Naive thymus-derived CD4-positive, alpha-beta T cell (primary cell): ENCODE measurements at regions of chr6 and their contacts with region 1.

Region 1: DNA sequence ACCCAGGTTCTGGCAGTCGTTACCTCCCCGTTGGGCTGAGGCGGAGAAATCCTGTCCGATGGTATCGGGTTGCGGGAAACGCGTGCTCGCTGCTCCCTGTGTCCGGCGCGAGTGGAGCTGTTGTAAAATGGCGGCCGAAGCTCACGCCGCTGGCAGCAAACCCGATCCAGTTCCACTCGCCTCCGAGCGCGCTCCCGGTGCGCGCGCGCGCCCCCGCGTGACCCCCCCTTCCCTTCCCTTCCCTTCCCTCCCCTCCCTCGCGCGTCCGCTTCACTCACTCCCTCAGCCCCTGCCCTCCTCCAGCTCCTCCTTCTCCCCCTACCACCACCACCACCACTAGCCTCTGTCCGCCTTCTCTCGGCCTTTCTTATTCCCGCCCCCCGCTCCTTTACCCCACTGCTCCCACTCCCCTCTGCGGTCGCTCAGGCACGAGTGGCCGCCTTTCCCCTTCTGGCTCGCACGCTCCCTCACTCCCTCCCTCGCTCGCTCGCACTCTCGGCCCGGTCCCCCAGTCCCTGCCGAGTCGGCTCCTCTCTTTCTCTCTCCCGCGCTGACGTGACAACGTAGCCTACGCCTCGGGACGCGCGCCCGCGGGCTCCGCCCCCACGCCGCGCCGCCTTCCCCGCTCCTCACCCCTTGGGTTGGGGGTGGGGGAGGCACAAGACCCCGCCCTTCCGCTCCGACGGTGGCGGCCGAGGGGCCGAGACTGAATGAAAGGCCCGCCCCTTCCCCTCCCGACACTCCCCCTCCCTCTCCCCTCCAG is at the start of gene SYNCRIP:
- DNase-seq: peak; percentile 96 to 99 (median 99)
- ATAC-seq: peak; percentile 91
- H3K4me3 ChIP-seq: peak within 1 kb of the TSS; percentile 99
- H3K4me3 Mint-ChIP-seq: peak within 1 kb of the TSS; percentile 90 to 99 (median 96)
- H3K27ac ChIP-seq: peak within 1 kb of the TSS; percentile 99
- H3K27ac Mint-ChIP-seq: peak within 1 kb of the TSS; percentile 97 to 100 (median 99)
- H3K4me1 ChIP-seq: peaks cover 29 to 31% of the 10 kb centered on the region in 2 donors
- H3K4me1 Mint-ChIP-seq: peaks cover 40 to 52% (median 49%) of the 10 kb centered on the region in 7 donors
- H3K27me3 ChIP-seq: no peaks in the 10 kb centered on the region
- H3K27me3 Mint-ChIP-seq: peaks cover 0 to under 1% (median 0%) of the 10 kb centered on the region in 5 donors
- total RNA-seq, gene SYNCRIP: 69.8 to 131 (median 82.2) TPM

Region 2: GRCh38 chr6:83859410-83860358 is 1783.3 kb before region 1 on chr6 and contains the start of gene CYB5R4:
- CTCF ChIA-PET with region 1: no interaction called
- POLR2A ChIA-PET with region 1: no interaction called
- intact Hi-C with region 1: loop called in 1 of 2 experiments (anchors 2 kb)
- DNase-seq: peak; percentile 88 to 95 (median 94)
- ATAC-seq: peak; percentile 98
- H3K4me3 ChIP-seq: peak within 1 kb of the TSS; percentile 92
- H3K4me3 Mint-ChIP-seq: peak within 1 kb of the TSS; percentile 87 to 100 (median 98)
- H3K27ac ChIP-seq: peak within 1 kb of the TSS; percentile 82
- H3K27ac Mint-ChIP-seq: peak within 1 kb of the TSS; percentile 85 to 96 (median 91)
- H3K4me1 ChIP-seq: peaks cover 14 to 21% of the 10 kb centered on the region in 2 donors
- H3K4me1 Mint-ChIP-seq: peaks cover 23 to 47% (median 37%) of the 10 kb centered on the region in 7 donors
- H3K27me3 ChIP-seq: no peaks in the 10 kb centered on the region
- H3K27me3 Mint-ChIP-seq: peaks cover 8 to 18% (median 16%) of the 10 kb centered on the region in 5 donors
- total RNA-seq, gene CYB5R4: 17.8 to 38.6 (median 21.0) TPM

Region 3: GRCh38 chr6:85449818-85450759 is 192.9 kb before region 1 on chr6 and contains the start of gene NT5E:
- CTCF ChIA-PET with region 1: no interaction called
- POLR2A ChIA-PET with region 1: no interaction called
- intact Hi-C with region 1: loop called in 1 of 2 experiments (anchors 5 kb)
- DNase-seq: peak in 5 of 9 donors; percentile 17 to 67 (median 30)
- ATAC-seq: peak; percentile 68
- H3K4me3 ChIP-seq: peak within 1 kb of the TSS; percentile 50
- H3K4me3 Mint-ChIP-seq: peak within 1 kb of the TSS; percentile 82 to 98 (median 89)
- H3K27ac ChIP-seq: no peak within 1 kb of the TSS
- H3K27ac Mint-ChIP-seq: peak within 1 kb of the TSS in 8 of 9 donors; percentile 10 to 95 (median 58)
- H3K4me1 ChIP-seq: peaks cover 0 to 9% of the 10 kb centered on the region in 2 donors
- H3K4me1 Mint-ChIP-seq: peaks cover 20 to 65% (median 46%) of the 10 kb centered on the region in 7 donors
- H3K27me3 ChIP-seq: peaks cover 0 to 15% of the 10 kb centered on the region in 2 donors
- H3K27me3 Mint-ChIP-seq: peaks cover 30 to 77% (median 63%) of the 10 kb centered on the region in 5 donors
- total RNA-seq, gene NT5E: 1.5 to 29.3 (median 2.8) TPM

Region 4: DNA sequence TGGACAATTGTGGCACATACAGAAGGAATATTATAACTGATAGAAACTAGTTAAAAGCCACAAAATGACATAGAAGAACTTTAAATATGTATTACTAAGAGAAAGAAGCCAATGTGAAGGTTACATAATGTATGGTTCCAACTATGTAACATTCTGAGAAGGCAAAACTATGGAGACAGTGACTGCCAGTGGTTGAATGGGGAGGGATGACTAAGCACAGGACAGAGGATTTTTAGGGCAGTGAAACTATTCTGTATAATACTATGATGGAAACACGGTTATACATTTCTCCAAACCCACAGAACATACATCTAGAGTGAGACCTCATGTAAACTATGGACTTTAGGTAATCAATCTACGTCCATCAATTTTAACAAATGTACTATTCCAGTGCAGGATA is 22.6 kb before region 1 on chr6:
- CTCF ChIA-PET with region 1: no interaction called
- POLR2A ChIA-PET with region 1: interaction called, 5 read pairs
- intact Hi-C with region 1: loop called (anchors 2 kb)
- DNase-seq: no peak
- ATAC-seq: no peak
- H3K4me3 ChIP-seq: no peak overlapping the region
- H3K4me3 Mint-ChIP-seq: no peak overlapping the region
- H3K27ac ChIP-seq: no peak overlapping the region
- H3K27ac Mint-ChIP-seq: peak overlapping the region in 4 of 9 donors; percentile 1 to 52 (median 16)
- H3K4me1 ChIP-seq: no peaks in the 10 kb centered on the region
- H3K4me1 Mint-ChIP-seq: peaks cover 18 to 42% (median 30%) of the 10 kb centered on the region in 7 donors
- H3K27me3 ChIP-seq: no peaks in the 10 kb centered on the region
- H3K27me3 Mint-ChIP-seq: no peaks in the 10 kb centered on the region

Region 5: GRCh38 chr6:85669735-85670194 is 26.8 kb after region 1 on chr6:
- CTCF ChIA-PET with region 1: interaction called, 5 read pairs
- POLR2A ChIA-PET with region 1: interaction called, 593 read pairs
- intact Hi-C with region 1: no loop called
- DNase-seq: peak in 8 of 9 donors; percentile 24 to 64 (median 50)
- ATAC-seq: peak; percentile 95
- H3K4me3 ChIP-seq: no peak overlapping the region
- H3K4me3 Mint-ChIP-seq: peak overlapping the region; percentile 52 to 80 (median 70)
- H3K27ac ChIP-seq: peak overlapping the region; percentile 46
- H3K27ac Mint-ChIP-seq: peak overlapping the region; percentile 80 to 95 (median 91)
- H3K4me1 ChIP-seq: peaks cover 24 to 32% of the 10 kb centered on the region in 2 donors
- H3K4me1 Mint-ChIP-seq: peaks cover 34 to 61% (median 56%) of the 10 kb centered on the region in 7 donors
- H3K27me3 ChIP-seq: no peaks in the 10 kb centered on the region
- H3K27me3 Mint-ChIP-seq: no peaks in the 10 kb centered on the region

Region 6: DNA sequence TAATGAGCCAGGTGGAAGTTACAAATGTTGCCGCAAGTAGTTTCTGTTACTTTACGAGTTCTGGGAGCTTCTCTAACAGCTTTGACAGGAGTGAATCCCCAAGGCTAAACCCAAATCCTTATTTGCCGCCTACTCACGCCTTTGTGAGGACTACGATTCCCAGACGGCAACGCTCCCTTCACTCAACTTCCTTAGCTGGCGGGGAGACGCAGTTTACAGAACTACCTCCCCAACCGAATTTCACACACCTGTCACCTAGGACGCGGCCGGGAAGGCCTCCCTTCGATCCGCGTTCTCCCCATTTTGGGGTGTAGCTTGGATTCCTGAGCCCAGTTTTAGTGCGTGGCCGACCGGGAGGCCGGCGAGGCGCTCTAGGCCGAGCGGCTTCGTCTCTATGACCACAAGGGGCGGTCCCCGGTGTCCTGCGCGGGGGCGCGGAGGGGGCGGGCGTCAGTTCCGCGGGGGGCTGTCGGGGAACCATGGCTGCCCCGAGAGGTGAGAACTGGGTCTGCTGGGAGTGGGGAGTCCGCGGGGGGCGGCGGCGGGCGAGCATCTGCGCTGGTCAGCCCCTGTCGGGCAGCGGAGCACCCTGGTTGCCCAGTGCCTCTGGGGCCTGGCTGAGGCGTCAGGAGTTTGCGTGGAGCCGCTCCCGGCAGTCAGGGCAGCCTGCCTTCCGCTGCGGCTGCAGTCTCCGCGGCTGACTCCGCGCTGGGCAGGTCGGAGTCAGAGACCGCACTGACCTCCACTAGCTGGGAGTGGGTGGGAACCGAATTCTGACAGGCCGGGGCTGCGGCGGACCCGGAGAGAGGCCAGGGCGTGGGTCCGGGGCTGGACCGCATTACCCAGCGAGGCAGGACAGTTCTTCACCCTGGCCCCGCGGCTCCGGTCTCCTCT is 1829.8 kb after region 1 on chr6 and contains the start of gene SLC35A1:
- CTCF ChIA-PET with region 1: no interaction called
- POLR2A ChIA-PET with region 1: no interaction called
- intact Hi-C with region 1: loop called (anchors 1 to 2 kb)
- DNase-seq: peak; percentile 78 to 92 (median 87)
- ATAC-seq: peak; percentile 97
- H3K4me3 ChIP-seq: peak within 1 kb of the TSS; percentile 81
- H3K4me3 Mint-ChIP-seq: peak within 1 kb of the TSS; percentile 88 to 99 (median 98)
- H3K27ac ChIP-seq: peak within 1 kb of the TSS; percentile 93
- H3K27ac Mint-ChIP-seq: peak within 1 kb of the TSS; percentile 95 to 100 (median 99)
- H3K4me1 ChIP-seq: peaks cover 9 to 11% of the 10 kb centered on the region in 2 donors
- H3K4me1 Mint-ChIP-seq: peaks cover 14 to 31% (median 20%) of the 10 kb centered on the region in 7 donors
- H3K27me3 ChIP-seq: no peaks in the 10 kb centered on the region
- H3K27me3 Mint-ChIP-seq: peaks cover 2 to 14% (median 9%) of the 10 kb centered on the region in 5 donors
- total RNA-seq, gene SLC35A1: 10.4 to 23.4 (median 15.6) TPM